ENCODE measurements at regions of chr11 and their contacts with region 1.

Region 1: GRCh38 chr11:62591448-62592145 is at the start of gene TUT1:
- DNase-seq: peak; percentile 100
- ATAC-seq: peak; percentile 81
- H3K4me3 ChIP-seq: peak within 1 kb of the TSS; percentile 76
- H3K27ac ChIP-seq: peak within 1 kb of the TSS; percentile 69
- H3K4me1 ChIP-seq: peaks cover 25% of the 10 kb centered on the region
- H3K27me3 ChIP-seq: no peaks in the 10 kb centered on the region
- CTCF ChIP-seq: no peak
- total RNA-seq, gene TUT1: 17.8 and 20.6 TPM in 2 replicates

Region 2: DNA sequence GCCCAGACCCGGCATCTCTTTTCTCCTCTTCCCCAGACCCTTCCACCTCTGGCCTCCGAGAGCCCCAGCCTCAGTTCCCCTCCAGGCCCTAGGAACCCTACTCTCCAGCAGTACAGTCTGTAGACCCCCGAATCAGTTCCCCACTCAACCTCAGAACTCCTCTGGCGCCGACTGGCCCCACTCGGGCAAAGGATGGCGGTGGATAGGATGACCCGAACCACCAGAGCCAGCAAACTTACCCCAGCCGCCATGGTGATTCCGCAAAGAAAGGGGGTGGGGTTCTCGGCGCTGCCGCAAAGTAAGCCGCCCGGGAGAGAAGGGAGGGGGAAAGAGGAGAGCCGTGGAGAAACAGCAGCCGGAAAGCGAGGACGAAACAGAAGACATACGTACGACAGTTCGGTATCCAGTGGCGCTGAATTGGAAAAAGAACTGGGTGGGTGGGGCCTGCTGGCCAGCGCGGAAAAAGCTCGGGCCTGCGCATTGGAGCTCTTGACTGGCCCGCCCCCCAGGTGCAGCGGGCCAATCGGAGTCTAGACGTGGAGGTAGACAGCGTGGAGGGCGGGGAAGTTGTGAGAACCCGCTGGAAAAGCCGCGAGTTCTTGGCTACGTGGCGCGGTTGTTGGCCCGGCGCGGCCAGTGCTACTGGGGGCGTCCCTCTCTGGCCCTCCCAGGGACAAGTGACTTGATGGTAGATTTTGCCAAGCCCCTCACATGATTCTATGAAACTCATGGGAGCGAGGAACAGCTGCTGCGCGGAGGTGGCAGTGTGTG is 17.8 kb before region 1 on chr11 and contains the start of gene EEF1G:
- CTCF ChIA-PET with region 1: interaction called, 7 read pairs
- POLR2A ChIA-PET with region 1: interaction called, 23 read pairs
- intact Hi-C with region 1: loop called (anchors 1 kb)
- DNase-seq: peak; percentile 100
- ATAC-seq: peak; percentile 87
- H3K4me3 ChIP-seq: peak within 1 kb of the TSS; percentile 94
- H3K27ac ChIP-seq: peak within 1 kb of the TSS; percentile 74
- H3K4me1 ChIP-seq: peaks cover 36% of the 10 kb centered on the region
- H3K27me3 ChIP-seq: no peaks in the 10 kb centered on the region
- CTCF ChIP-seq: no peak
- total RNA-seq, gene EEF1G: 1,577 and 1,815 TPM in 2 replicates

Region 3: DNA sequence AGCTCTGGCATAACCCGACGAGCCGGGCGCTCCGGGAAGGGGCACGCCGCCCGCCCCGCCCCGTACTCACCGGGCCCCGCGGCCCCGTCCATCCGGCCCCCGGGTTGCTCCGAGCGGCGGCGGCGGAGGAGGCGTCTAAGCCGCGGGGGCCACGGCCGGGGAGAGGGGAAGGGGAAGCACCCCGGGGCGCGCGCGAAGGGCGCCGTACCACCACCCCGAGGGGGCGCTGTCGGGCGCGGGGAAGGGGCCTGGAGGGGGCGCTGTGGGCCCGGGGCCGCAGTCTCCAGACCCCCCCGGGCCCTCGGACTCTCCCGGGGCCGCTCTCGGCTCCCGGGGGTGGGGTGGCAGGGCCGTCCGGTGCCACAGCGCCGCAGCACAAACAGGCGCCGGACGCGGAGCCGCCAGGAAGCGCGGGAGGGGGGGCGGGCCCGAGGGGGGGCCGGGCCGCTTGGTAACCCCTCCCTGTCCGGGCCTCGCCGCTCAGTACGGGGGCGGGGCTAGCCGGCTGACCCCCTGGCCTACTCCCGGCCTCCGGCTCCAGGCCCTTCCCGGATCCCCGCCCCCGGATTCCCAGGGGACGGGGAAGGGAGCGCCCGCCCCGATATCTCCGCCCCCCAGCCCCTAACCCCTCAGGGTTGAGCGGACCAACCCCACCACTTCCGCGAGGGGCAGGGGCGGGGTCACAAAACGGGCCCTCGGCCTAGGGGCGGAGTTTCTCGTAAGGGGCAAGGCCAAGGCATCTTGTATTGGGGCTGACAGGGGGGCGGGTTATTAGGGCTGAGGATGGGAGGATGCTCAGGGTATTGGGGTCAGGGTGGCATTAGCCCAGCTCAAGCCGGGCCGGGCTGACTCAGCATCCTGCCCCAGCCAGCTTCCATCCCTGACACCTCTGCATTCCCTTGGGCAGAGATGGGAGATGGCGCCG is 21.0 kb after region 1 on chr11 and contains the starts of genes EML3 and ROM1:
- CTCF ChIA-PET with region 1: interaction called, 9 read pairs
- POLR2A ChIA-PET with region 1: interaction called, 3 read pairs
- intact Hi-C with region 1: loop called (anchors 1 kb)
- DNase-seq: peak; percentile 79
- ATAC-seq: peak; percentile 72
- H3K4me3 ChIP-seq: peak within 1 kb of the TSS; percentile 81
- H3K27ac ChIP-seq: peak within 1 kb of the TSS; percentile 59
- H3K4me1 ChIP-seq: peaks cover 29% of the 10 kb centered on the region
- H3K27me3 ChIP-seq: no peaks in the 10 kb centered on the region
- CTCF ChIP-seq: peak; percentile 97
- total RNA-seq, gene EML3: 32.8 and 50.6 TPM in 2 replicates
- total RNA-seq, gene ROM1: 5.8 and 13.9 TPM in 2 replicates

Region 4: DNA sequence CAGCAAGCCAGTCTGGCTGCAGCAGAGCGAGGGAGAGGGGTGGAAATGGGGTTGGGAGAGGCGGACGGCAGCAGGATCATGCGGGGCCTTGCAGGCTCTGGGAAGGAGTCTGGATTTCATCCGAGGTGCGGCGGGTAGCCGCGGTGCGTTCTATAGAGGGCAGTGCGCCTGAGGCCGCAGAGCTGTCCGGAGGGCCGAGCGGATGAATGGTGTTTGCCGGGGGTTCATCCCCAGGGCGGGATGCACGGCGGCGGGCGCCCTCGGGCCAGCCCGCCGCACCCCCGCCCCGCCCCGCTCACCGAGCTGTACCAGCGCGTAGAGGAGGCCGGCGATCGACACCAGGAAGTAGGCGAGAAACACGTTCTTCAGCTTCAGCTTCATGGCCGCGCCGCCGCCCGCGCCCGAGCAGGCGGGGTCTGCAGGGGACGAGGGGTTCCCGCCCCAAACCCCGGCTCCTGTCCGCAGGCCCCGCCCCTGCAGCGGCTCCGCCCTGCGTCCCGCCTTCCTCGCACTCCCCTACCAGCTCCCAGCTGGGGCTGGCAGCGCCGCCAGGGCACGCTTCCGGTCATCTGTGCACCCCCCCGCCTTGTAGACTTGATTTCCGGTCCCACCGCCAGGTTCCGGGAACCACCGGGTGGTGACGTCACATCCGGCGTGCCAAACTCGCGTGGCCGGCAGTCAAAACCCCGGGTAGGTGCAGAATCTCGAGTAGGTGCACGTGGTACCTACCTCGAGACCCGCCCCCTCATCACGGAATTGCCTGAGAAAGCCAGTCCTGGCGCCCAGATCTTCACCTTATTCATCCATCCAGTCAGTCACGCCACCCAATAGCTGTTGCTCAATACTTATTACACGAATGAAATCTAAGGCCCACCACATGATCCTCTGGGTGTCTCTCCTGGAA is 30.2 kb after region 1 on chr11 and contains the start of gene B3GAT3:
- CTCF ChIA-PET with region 1: no interaction called
- POLR2A ChIA-PET with region 1: interaction called, 20 read pairs
- intact Hi-C with region 1: no loop called
- DNase-seq: peak; percentile 99
- ATAC-seq: peak; percentile 95
- H3K4me3 ChIP-seq: peak within 1 kb of the TSS; percentile 88
- H3K27ac ChIP-seq: peak within 1 kb of the TSS; percentile 79
- H3K4me1 ChIP-seq: peaks cover 21% of the 10 kb centered on the region
- H3K27me3 ChIP-seq: no peaks in the 10 kb centered on the region
- CTCF ChIP-seq: no peak
- total RNA-seq, gene B3GAT3: 65.8 and 76.3 TPM in 2 replicates

Region 5: DNA sequence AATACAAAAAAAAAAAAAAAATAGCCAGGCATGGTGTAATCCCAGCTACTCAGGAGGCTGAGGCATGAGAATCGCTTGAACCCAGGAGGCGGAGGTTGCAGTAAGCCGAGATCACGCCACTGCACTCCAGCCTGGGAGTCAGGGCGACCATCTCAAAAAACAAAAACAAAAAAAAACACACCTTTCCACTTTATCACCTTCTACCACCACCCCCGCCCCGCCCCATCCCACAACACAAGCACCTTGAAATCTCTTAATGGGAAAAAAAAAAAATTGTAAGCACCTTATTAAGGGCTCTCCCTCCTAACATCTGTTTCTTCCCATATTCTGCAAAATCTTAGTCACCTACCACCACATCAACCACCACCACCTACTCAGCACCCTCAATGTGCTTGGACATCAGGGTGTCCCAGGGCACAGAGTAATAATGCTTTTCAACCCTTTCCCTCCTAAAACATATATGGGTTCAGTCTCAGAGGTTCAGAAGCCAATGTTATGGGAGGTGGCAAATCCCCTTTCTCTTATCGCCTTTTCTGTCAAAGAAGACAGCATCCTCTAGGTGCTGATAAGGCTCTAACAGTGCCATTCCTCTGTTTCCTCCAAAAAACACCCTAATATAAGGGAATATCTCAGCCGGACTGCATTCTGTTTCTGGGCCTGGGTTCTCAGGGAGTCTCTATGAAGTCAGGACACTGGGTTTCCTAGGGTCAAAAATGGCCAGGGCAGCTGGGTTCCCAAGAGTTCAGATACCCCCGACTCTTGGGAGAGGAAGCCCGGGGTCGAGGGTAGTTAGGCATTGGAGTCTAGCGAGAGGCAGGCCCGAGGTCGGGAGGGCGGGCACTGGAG is 60.8 kb after region 1 on chr11:
- CTCF ChIA-PET with region 1: no interaction called
- POLR2A ChIA-PET with region 1: interaction called, 6 read pairs
- intact Hi-C with region 1: loop called (anchors 5 kb)
- DNase-seq: no peak
- ATAC-seq: no peak
- H3K4me3 ChIP-seq: peak overlapping the region; percentile 76
- H3K27ac ChIP-seq: peak overlapping the region; percentile 33
- H3K4me1 ChIP-seq: peaks cover 11% of the 10 kb centered on the region
- H3K27me3 ChIP-seq: no peaks in the 10 kb centered on the region
- CTCF ChIP-seq: no peak

Region 6: DNA sequence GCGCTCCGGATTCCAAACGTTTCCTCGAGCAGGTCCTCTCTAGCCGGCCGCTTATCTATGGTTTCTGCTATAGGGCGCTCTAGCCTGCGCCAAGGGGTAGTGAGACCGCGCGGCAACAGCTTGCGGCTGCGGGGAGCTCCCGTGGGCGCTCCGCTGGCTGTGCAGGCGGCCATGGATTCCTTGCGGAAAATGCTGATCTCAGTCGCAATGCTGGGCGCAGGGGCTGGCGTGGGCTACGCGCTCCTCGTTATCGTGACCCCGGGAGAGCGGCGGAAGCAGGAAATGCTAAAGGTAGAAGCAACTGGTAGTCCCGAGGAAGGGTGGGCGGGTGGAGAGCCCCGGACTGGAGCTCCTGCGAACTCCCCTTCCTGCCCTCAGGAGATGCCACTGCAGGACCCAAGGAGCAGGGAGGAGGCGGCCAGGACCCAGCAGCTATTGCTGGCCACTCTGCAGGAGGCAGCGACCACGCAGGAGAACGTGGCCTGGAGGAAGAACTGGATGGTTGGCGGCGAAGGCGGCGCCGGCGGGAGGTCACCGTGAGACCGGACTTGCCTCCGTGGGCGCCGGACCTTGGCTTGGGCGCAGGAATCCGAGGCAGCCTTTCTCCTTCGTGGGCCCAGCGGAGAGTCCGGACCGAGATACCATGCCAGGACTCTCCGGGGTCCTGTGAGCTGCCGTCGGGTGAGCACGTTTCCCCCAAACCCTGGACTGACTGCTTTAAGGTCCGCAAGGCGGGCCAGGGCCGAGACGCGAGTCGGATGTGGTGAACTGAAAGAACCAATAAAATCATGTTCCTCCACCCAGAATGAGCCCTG is 80.2 kb after region 1 on chr11 and contains the starts of genes LBHD1 and UQCC3:
- CTCF ChIA-PET with region 1: no interaction called
- POLR2A ChIA-PET with region 1: interaction called, 30 read pairs
- intact Hi-C with region 1: no loop called
- DNase-seq: peak; percentile 90
- ATAC-seq: peak; percentile 72
- H3K4me3 ChIP-seq: peak within 1 kb of the TSS; percentile 92
- H3K27ac ChIP-seq: peak within 1 kb of the TSS; percentile 80
- H3K4me1 ChIP-seq: peaks cover 40% of the 10 kb centered on the region
- H3K27me3 ChIP-seq: no peaks in the 10 kb centered on the region
- CTCF ChIP-seq: no peak
- total RNA-seq, gene LBHD1: 4.7 and 9.7 TPM in 2 replicates
- total RNA-seq, gene UQCC3: 83.6 and 95.6 TPM in 2 replicates